PC-9 (cell line): ENCODE measurements at regions of chrX and their contacts with region 1.

Region 1: DNA sequence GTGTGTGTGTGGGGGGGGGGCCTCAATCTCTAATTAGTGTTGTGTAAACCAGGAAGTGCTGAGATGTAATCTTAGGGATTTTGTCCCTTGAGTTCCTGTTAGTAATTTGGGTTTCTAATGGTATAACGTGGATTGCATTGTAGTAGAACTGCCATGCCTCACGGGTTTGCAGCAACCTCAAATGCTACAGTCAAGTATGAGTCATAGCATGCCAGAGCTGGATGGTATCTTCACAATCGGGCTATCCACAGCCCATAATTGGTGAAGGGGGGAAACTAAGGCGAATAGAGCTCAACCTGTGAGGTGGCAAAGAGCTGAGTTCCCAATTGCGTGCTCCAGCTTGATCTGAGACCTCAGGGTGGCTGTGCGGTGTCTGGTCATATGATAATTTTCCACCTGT is 2.2 kb upstream of the FMR1NB start:
- DNase-seq: peak; percentile 25 to 48
- H3K4me3 ChIP-seq: no peak overlapping the region
- H3K27ac ChIP-seq: no peak overlapping the region
- H3K4me1 ChIP-seq: no peaks in the 10 kb centered on the region; the same call in 1 of the 2 replicates
- H3K27me3 ChIP-seq: peaks cover 4% of the 10 kb centered on the region; the same call in 1 of the 2 replicates
- CTCF ChIP-seq: no peak

Region 2: GRCh38 chrX:147757750-147758149 is 221.2 kb before region 1 on chrX:
- CTCF ChIA-PET with region 1: no interaction called
- POLR2A ChIA-PET with region 1: no interaction called
- intact Hi-C with region 1: no loop called
- DNase-seq: no peak
- H3K4me3 ChIP-seq: no peak overlapping the region
- H3K27ac ChIP-seq: no peak overlapping the region
- H3K4me1 ChIP-seq: no peaks in the 10 kb centered on the region
- H3K27me3 ChIP-seq: no peaks in the 10 kb centered on the region
- CTCF ChIP-seq: no peak

Region 3: DNA sequence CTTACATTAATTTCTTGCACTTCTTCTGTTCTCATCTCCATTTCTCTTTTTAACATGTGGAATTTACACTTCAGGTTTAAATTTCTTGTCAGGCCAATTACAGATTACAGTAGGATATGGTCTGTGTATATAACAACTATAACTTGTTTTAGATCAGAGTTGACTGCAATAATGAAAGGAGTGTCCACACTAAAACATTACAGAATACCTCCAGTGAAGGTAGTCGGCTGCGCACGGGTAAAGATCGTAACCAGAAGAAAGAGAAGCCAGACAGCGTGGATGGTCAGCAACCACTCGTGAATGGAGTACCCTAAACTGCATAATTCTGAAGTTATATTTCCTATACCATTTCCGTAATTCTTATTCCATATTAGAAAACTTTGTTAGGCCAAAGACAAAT is 30.4 kb before region 1 on chrX:
- CTCF ChIA-PET with region 1: no interaction called
- POLR2A ChIA-PET with region 1: no interaction called
- intact Hi-C with region 1: loop called (anchors 2 kb)
- DNase-seq: no peak
- H3K4me3 ChIP-seq: no peak overlapping the region
- H3K27ac ChIP-seq: no peak overlapping the region
- H3K4me1 ChIP-seq: no peaks in the 10 kb centered on the region
- H3K27me3 ChIP-seq: no peaks in the 10 kb centered on the region
- CTCF ChIP-seq: no peak

Region 4: GRCh38 chrX:148588649-148589310 is 609.8 kb after region 1 on chrX:
- CTCF ChIA-PET with region 1: interaction called, 11 read pairs
- POLR2A ChIA-PET with region 1: no interaction called
- intact Hi-C with region 1: no loop called
- DNase-seq: no peak
- H3K4me3 ChIP-seq: no peak overlapping the region
- H3K27ac ChIP-seq: no peak overlapping the region
- H3K4me1 ChIP-seq: no peaks in the 10 kb centered on the region
- H3K27me3 ChIP-seq: peaks cover 21% of the 10 kb centered on the region
- CTCF ChIP-seq: no peak